ENCODE measurements at regions of chr3 and their contacts with region 1.

Region 1: GRCh38 chr3:29759411-29760225 is 478.7 kb downstream of the RBMS3 start:
- DNase-seq: peak; percentile 53
- H3K4me3 ChIP-seq: no peak overlapping the region
- H3K27ac ChIP-seq: peak overlapping the region; percentile 98
- H3K4me1 ChIP-seq: peaks cover 47% of the 10 kb centered on the region
- H3K27me3 ChIP-seq: no peaks in the 10 kb centered on the region
- CTCF ChIP-seq: no peak
- POLR2A ChIP-seq: no peak

Region 2: GRCh38 chr3:28916713-28917499 is 842.7 kb before region 1 on chr3:
- CTCF ChIA-PET with region 1: interaction called, 66 read pairs
- POLR2A ChIA-PET with region 1: no interaction called
- dilution Hi-C with region 1: no loop called
- intact Hi-C with region 1: loop called (anchors 1 kb)
- DNase-seq: peak; percentile 96
- H3K4me3 ChIP-seq: peak overlapping the region; percentile 3 to 73 (median 45)
- H3K27ac ChIP-seq: peak overlapping the region; percentile 57
- H3K4me1 ChIP-seq: peaks cover 9% of the 10 kb centered on the region
- H3K27me3 ChIP-seq: no peaks in the 10 kb centered on the region
- CTCF ChIP-seq: peak; percentile 65 to 71
- POLR2A ChIP-seq: no peak

Region 3: GRCh38 chr3:29240248-29240647 is 519.4 kb before region 1 on chr3:
- CTCF ChIA-PET with region 1: no interaction called
- POLR2A ChIA-PET with region 1: no interaction called
- dilution Hi-C with region 1: no loop called
- intact Hi-C with region 1: loop called (anchors 1 kb)
- DNase-seq: peak; percentile 86
- H3K4me3 ChIP-seq: no peak overlapping the region
- H3K27ac ChIP-seq: peak overlapping the region; percentile 70
- H3K4me1 ChIP-seq: peaks cover 17% of the 10 kb centered on the region
- H3K27me3 ChIP-seq: no peaks in the 10 kb centered on the region
- CTCF ChIP-seq: no peak
- POLR2A ChIP-seq: no peak

Region 4: DNA sequence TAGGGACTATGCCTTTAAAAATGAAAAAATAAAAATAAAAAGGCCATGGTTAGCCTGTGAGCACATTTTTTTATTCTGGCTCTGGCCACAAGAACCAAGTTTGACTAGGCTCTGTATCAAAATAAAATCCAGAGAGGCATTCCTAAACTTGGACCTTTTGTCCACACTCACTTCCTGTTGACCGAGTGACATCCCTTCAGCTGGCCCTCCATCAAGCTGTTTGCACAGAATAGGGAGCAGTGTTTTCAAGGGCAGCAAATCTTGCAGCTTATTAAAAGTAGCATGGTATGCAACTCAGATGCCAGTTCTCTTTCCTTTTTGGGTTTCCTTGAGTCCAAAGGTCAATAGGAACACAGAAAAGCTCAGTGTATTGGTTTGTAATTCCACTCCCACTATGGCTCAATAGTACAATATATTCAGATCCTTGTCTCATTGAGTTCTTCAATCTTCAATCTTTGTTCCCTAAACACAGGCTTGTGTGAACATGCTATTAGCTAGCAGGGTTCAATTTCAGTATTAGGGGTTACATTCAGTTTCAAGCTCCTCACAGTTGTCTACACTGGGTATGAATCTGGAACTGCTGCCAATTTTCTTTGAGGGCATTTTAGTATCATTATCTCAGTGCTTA is 234.2 kb before region 1 on chr3:
- CTCF ChIA-PET with region 1: interaction called, 7 read pairs
- POLR2A ChIA-PET with region 1: interaction called, 3 read pairs
- dilution Hi-C with region 1: no loop called
- intact Hi-C with region 1: loop called (anchors 1 kb)
- DNase-seq: peak; percentile 93
- H3K4me3 ChIP-seq: no peak overlapping the region
- H3K27ac ChIP-seq: peak overlapping the region; percentile 64
- H3K4me1 ChIP-seq: peaks cover 25% of the 10 kb centered on the region
- H3K27me3 ChIP-seq: no peaks in the 10 kb centered on the region
- CTCF ChIP-seq: no peak
- POLR2A ChIP-seq: peak; percentile 48

Region 5: GRCh38 chr3:29627136-29628117 is 132.2 kb before region 1 on chr3:
- CTCF ChIA-PET with region 1: interaction called, 3 read pairs
- POLR2A ChIA-PET with region 1: no interaction called
- dilution Hi-C with region 1: no loop called
- intact Hi-C with region 1: loop called (anchors 2 kb)
- DNase-seq: peak; percentile 50
- H3K4me3 ChIP-seq: no peak overlapping the region
- H3K27ac ChIP-seq: no peak overlapping the region
- H3K4me1 ChIP-seq: peaks cover 23% of the 10 kb centered on the region
- H3K27me3 ChIP-seq: no peaks in the 10 kb centered on the region
- CTCF ChIP-seq: no peak
- POLR2A ChIP-seq: no peak

Region 6: GRCh38 chr3:29746163-29746562 is 13.5 kb before region 1 on chr3:
- CTCF ChIA-PET with region 1: interaction called, 3 read pairs
- POLR2A ChIA-PET with region 1: no interaction called
- dilution Hi-C with region 1: no loop called
- intact Hi-C with region 1: loop called (anchors 1 kb)
- DNase-seq: peak; percentile 84
- H3K4me3 ChIP-seq: no peak overlapping the region
- H3K27ac ChIP-seq: peak overlapping the region; percentile 15
- H3K4me1 ChIP-seq: peaks cover 8% of the 10 kb centered on the region
- H3K27me3 ChIP-seq: no peaks in the 10 kb centered on the region
- CTCF ChIP-seq: no peak
- POLR2A ChIP-seq: no peak

Region 7: DNA sequence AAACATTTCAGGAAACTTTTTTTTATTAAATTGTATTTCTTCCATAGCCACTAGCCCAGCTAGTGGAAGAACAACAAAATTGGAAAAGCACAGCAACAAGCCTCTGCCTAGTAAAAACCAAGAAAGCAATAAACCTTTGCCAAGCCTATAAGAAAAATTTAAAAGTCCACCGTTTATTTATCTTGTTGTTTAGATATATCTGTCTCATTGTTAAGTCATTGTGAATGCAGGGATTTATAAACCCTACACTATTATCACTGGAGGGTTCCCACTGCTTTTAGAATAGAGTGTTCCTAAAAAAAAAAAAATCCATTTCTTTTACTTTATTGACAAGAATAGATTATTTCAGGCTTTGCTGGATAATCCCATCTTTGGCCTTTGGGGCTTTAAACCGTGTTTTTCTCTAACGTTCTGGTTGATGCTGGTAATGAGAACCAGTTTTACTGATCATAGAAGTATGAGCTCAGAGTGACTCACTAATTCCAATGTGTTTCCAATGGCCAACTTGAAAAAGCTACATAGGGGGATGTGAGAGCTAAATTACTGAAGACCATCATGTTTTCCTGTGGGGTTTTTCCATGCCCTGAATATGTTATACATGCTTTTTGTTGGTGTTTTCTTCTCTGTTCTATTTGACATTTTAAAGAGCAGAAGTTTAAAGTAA is 155.4 kb after region 1 on chr3:
- CTCF ChIA-PET with region 1: no interaction called
- POLR2A ChIA-PET with region 1: no interaction called
- dilution Hi-C with region 1: no loop called
- intact Hi-C with region 1: no loop called
- DNase-seq: no peak
- H3K4me3 ChIP-seq: no peak overlapping the region
- H3K27ac ChIP-seq: no peak overlapping the region
- H3K4me1 ChIP-seq: no peaks in the 10 kb centered on the region
- H3K27me3 ChIP-seq: no peaks in the 10 kb centered on the region
- CTCF ChIP-seq: no peak
- POLR2A ChIP-seq: no peak